ENCODE measurements at regions of chr19 and their contacts with region 1.

Region 1: GRCh38 chr19:56309517-56310185 is 5.0 kb downstream of the ZSCAN5A start:
- DNase-seq: peak; percentile 59
- H3K4me3 Mint-ChIP-seq: no peak overlapping the region
- H3K27ac Mint-ChIP-seq: no peak overlapping the region
- H3K4me1 Mint-ChIP-seq: peaks cover 28% of the 10 kb centered on the region
- H3K27me3 Mint-ChIP-seq: no peaks in the 10 kb centered on the region

Region 2: DNA sequence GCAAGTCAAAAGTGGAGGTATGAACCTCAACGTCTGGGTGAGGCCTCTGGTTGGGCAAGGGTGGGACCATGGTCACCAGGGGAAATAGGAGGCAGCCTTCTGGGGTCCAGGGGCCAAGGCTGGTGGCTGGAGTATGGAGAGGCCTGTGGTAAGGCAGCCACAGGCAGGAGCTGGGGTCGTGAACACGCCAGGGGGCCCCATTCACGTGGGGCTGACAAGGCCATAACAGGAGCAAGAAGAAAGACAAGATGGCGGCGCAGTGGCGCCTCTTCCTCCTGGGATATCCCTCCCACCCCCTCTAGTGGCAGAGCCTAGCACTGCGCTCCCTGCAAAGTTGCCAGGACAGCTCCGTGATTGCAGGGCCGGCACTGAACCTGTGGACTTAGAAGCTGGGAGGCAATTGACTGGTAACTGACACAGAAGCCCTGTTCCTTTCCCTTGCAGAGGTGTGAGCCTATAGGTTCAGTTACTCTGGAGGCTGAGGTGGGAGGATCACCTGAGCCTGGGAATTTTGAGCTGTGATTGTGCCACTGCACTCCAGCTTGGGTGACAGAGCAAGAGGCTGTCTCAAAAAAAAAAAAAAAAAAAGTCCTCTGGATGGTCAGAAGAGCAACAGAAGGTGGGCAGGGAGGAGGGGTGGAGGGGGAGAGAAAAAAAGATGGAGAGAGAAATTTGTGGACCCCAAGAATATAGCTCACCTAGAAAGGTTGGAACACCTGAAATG is 56.8 kb before region 1 on chr19:
- CTCF ChIA-PET with region 1: interaction called, 11 read pairs
- POLR2A ChIA-PET with region 1: no interaction called
- DNase-seq: peak; percentile 79
- H3K4me3 Mint-ChIP-seq: no peak overlapping the region
- H3K27ac Mint-ChIP-seq: peak overlapping the region; percentile 33
- H3K4me1 Mint-ChIP-seq: no peaks in the 10 kb centered on the region
- H3K27me3 Mint-ChIP-seq: no peaks in the 10 kb centered on the region

Region 3: GRCh38 chr19:56356944-56357343 is 47.3 kb after region 1 on chr19:
- CTCF ChIA-PET with region 1: no interaction called
- POLR2A ChIA-PET with region 1: no interaction called
- DNase-seq: no peak
- H3K4me3 Mint-ChIP-seq: no peak overlapping the region
- H3K27ac Mint-ChIP-seq: no peak overlapping the region
- H3K4me1 Mint-ChIP-seq: no peaks in the 10 kb centered on the region
- H3K27me3 Mint-ChIP-seq: no peaks in the 10 kb centered on the region